ENCODE measurements at regions of chr5 and their contacts with region 1.

Region 1: DNA sequence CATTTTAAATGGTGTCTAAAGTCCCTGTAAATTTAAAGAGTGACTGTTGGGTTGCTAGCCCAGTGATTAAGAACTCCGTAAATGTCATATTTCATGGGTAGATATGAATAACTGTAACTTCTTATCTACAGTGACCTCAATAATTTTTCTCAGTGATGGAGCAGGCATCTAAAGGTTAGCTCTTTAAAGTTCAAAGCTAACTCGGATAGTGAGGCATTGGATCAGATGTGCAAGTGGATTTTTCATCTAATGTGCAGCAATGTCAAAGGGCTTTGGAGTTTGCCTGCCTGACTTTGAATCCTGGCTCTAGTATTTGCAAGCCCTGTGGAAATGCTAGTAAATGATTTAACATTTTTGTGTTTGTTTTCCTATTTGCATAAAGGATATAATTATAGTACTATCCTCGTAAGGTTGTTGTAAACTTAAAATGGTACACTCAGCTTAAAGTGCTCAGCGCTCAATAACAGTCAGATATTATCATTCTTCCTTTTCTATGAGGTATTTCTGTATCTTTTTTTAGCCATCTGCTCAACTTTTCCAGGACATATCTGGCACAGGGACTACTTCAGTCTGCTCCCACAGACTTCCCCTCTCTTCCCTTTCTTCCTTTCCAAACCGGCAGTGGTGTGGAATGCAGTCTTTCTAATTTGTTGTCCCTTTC is 163.7 kb upstream of the ELL2 start:
- DNase-seq: peak; percentile 92
- ATAC-seq: peak; percentile 92
- H3K4me3 ChIP-seq: peak overlapping the region; percentile 36 to 61 (median 44); a peak in 4 of 6 replicates
- H3K27ac ChIP-seq: peak overlapping the region; percentile 86
- H3K4me1 ChIP-seq: peaks cover 95% of the 10 kb centered on the region
- H3K27me3 ChIP-seq: no peaks in the 10 kb centered on the region
- CTCF ChIP-seq: no peak
- EP300 ChIP-seq: peak in 1 of 2 experiments; percentile 91; a peak in 2 of 4 replicates
- POLR2A ChIP-seq: peak in 1 of 2 experiments; percentile 43; a peak in 1 of 4 replicates
- RAD21 ChIP-seq: no peak

Region 2: GRCh38 chr5:96101358-96102089 is 23.8 kb before region 1 on chr5:
- CTCF ChIA-PET with region 1: no interaction called
- POLR2A ChIA-PET with region 1: no interaction called
- in situ Hi-C with region 1: no loop called
- intact Hi-C with region 1: no loop called
- DNase-seq: no peak
- ATAC-seq: no peak
- H3K4me3 ChIP-seq: no peak overlapping the region
- H3K27ac ChIP-seq: no peak overlapping the region
- H3K4me1 ChIP-seq: peaks cover 21% of the 10 kb centered on the region
- H3K27me3 ChIP-seq: no peaks in the 10 kb centered on the region
- CTCF ChIP-seq: no peak
- EP300 ChIP-seq: no peak
- POLR2A ChIP-seq: no peak
- RAD21 ChIP-seq: no peak

Region 3: DNA sequence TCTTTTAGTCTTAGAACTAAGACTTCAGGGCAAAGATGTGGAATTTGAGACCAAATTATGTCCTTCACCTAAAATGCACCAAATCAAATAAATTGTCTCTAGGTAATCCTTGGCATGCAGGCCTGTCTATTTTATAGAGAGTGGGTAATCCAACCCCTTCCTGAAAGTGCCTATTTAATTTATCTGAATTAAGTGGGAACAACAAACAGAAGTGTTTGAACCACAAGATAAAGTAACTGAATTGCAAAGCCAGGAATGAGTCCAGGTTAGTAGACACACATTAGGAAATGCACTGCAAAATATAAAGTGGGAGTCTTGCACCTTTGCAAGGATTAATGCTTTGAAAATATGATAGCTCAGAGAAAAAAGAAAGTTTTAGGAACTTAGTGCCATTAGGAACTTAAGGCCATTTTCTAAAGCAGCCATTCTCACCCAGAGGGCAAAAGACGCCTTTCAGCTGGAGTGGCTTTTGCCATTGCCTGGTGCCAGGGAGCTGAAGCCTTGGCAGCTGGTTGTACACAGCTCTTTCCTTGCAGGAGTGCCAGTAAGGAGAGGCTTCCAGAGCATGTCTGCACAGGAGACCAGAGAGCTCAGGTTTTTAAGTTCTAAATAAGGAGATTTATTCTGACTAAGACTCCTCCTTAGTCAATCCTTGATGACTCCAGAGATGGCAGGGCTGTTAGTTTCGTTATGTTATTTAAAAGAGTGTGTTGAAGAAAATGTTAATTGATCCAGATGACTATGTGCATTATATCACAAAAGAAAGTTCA is 12.0 kb before region 1 on chr5:
- CTCF ChIA-PET with region 1: no interaction called
- POLR2A ChIA-PET with region 1: interaction called, 12 read pairs
- in situ Hi-C with region 1: no loop called
- intact Hi-C with region 1: no loop called
- DNase-seq: no peak
- ATAC-seq: no peak
- H3K4me3 ChIP-seq: no peak overlapping the region
- H3K27ac ChIP-seq: no peak overlapping the region
- H3K4me1 ChIP-seq: peaks cover 89% of the 10 kb centered on the region
- H3K27me3 ChIP-seq: no peaks in the 10 kb centered on the region
- CTCF ChIP-seq: no peak
- EP300 ChIP-seq: no peak
- POLR2A ChIP-seq: no peak
- RAD21 ChIP-seq: no peak

Region 4: GRCh38 chr5:96961053-96961452 is 835.7 kb after region 1 on chr5:
- CTCF ChIA-PET with region 1: no interaction called
- POLR2A ChIA-PET with region 1: no interaction called
- in situ Hi-C with region 1: no loop called
- intact Hi-C with region 1: no loop called
- DNase-seq: no peak
- ATAC-seq: no peak
- H3K4me3 ChIP-seq: no peak overlapping the region
- H3K27ac ChIP-seq: no peak overlapping the region
- H3K4me1 ChIP-seq: peaks cover 25% of the 10 kb centered on the region
- H3K27me3 ChIP-seq: no peaks in the 10 kb centered on the region
- CTCF ChIP-seq: no peak
- EP300 ChIP-seq: no peak
- POLR2A ChIP-seq: no peak
- RAD21 ChIP-seq: no peak

Measured in HepG2 (cell line).